ENCODE measurements at regions of chr9 and their contacts with region 1.

Region 1: GRCh38 chr9:77163884-77164283 is 13.4 kb upstream of the VPS13A start:
- DNase-seq: no peak
- ATAC-seq: no peak
- H3K4me3 ChIP-seq: no peak overlapping the region
- H3K27ac ChIP-seq: no peak overlapping the region
- H3K4me1 ChIP-seq: no peaks in the 10 kb centered on the region
- H3K27me3 ChIP-seq: no peaks in the 10 kb centered on the region
- CTCF ChIP-seq: no peak
- POLR2A ChIP-seq: no peak
- RAD21 ChIP-seq: no peak

Region 2: GRCh38 chr9:75615284-75615683 is 1548.6 kb before region 1 on chr9:
- CTCF ChIA-PET with region 1: no interaction called
- POLR2A ChIA-PET with region 1: no interaction called
- RAD21 ChIA-PET with region 1: no interaction called
- intact Hi-C with region 1: no loop called
- DNase-seq: no peak
- ATAC-seq: no peak
- H3K4me3 ChIP-seq: no peak overlapping the region
- H3K27ac ChIP-seq: no peak overlapping the region
- H3K4me1 ChIP-seq: peaks cover 4 to 5% of the 10 kb centered on the region in 2 experiments; a peak in 1 of 4 replicates
- H3K27me3 ChIP-seq: peaks cover 15% of the 10 kb centered on the region
- CTCF ChIP-seq: no peak
- POLR2A ChIP-seq: no peak
- RAD21 ChIP-seq: no peak

Region 3: GRCh38 chr9:76943054-76943453 is 220.8 kb before region 1 on chr9:
- CTCF ChIA-PET with region 1: no interaction called
- POLR2A ChIA-PET with region 1: no interaction called
- RAD21 ChIA-PET with region 1: no interaction called
- intact Hi-C with region 1: no loop called
- DNase-seq: no peak
- ATAC-seq: no peak
- H3K4me3 ChIP-seq: no peak overlapping the region
- H3K27ac ChIP-seq: no peak overlapping the region
- H3K4me1 ChIP-seq: peaks cover 3 to 11% of the 10 kb centered on the region in 2 experiments; a peak in 3 of 4 replicates
- H3K27me3 ChIP-seq: no peaks in the 10 kb centered on the region
- CTCF ChIP-seq: no peak
- POLR2A ChIP-seq: no peak
- RAD21 ChIP-seq: no peak

Region 4: DNA sequence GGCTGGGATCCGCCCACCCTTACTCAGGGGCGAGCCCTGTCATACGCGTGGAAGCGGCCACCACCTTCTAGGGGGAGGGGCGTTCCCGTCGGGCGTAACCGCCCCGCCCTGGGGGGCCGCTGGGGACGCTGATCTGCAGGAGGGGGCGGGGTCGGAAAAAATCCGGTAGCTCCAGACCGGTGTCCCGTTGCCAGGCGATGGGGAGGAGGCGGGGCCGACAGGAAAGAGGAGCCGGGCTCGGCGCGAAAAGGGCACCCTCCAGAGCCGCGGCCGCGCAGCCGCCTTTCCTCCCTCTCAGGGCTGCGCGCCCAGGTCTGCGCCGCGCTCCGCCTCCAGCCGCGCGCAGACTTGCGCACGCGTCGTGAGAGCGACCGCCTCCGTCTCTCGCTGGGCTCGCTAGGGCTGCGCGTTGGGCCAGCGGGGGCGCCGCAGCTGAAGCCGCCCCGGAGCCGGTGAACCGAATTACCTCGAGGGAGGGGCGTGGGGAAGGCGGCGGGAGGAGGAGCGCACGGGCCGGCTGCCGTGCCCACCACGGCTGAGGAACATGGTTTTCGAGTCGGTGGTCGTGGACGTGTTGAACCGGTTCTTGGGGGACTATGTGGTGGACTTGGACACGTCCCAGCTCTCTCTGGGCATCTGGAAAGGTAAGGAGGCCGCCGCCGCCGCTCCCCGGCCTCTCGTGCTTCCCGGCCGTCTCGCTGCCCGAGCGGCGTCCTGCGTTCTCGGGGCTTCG is 13.4 kb after region 1 on chr9 and contains the start of gene VPS13A:
- CTCF ChIA-PET with region 1: interaction called, 24 read pairs
- POLR2A ChIA-PET with region 1: no interaction called
- RAD21 ChIA-PET with region 1: interaction called in 1 of 2 experiments, 3 read pairs
- intact Hi-C with region 1: no loop called
- DNase-seq: peak; percentile 88
- ATAC-seq: peak; percentile 93
- H3K4me3 ChIP-seq: peak within 1 kb of the TSS; percentile 68 to 70
- H3K27ac ChIP-seq: peak within 1 kb of the TSS; percentile 83
- H3K4me1 ChIP-seq: peaks cover 4 to 14% of the 10 kb centered on the region in 2 experiments; a peak in 2 of 4 replicates
- H3K27me3 ChIP-seq: no peaks in the 10 kb centered on the region
- CTCF ChIP-seq: peak in 2 of 3 experiments; percentile 3 to 17; a peak in 3 of 6 replicates
- POLR2A ChIP-seq: peak; percentile 71
- RAD21 ChIP-seq: no peak
- total RNA-seq, gene VPS13A: 52.8 TPM

Region 5: DNA sequence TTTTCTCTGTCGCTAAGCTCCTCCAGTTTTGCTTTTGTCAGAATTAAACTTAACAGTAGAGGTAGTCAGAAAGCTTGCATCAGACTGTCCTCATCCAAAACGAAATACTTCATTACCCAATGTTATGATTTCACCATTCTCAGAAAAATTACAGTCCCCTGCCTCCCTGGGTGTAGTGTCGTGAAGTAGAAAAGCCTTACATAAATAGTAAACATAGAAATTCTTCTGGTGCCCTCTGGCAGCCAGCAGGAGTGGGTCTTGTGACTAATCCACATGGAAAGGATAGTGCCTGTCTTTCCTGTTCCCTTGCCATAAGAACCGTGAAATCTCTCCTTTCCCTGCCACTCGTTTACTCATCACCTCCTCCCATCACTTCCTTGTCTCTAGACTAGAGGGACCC is 253.7 kb after region 1 on chr9:
- CTCF ChIA-PET with region 1: no interaction called
- POLR2A ChIA-PET with region 1: no interaction called
- RAD21 ChIA-PET with region 1: no interaction called
- intact Hi-C with region 1: no loop called
- DNase-seq: no peak
- ATAC-seq: no peak
- H3K4me3 ChIP-seq: no peak overlapping the region
- H3K27ac ChIP-seq: no peak overlapping the region
- H3K4me1 ChIP-seq: no peaks in the 10 kb centered on the region
- H3K27me3 ChIP-seq: no peaks in the 10 kb centered on the region
- CTCF ChIP-seq: no peak
- POLR2A ChIP-seq: no peak
- RAD21 ChIP-seq: no peak

Region 6: GRCh38 chr9:77488439-77489126 is 324.7 kb after region 1 on chr9:
- CTCF ChIA-PET with region 1: no interaction called
- POLR2A ChIA-PET with region 1: no interaction called
- RAD21 ChIA-PET with region 1: no interaction called
- intact Hi-C with region 1: loop called (anchors 2 kb)
- DNase-seq: peak; percentile 7
- ATAC-seq: peak; percentile 77
- H3K4me3 ChIP-seq: no peak overlapping the region
- H3K27ac ChIP-seq: no peak overlapping the region
- H3K4me1 ChIP-seq: no peaks in the 10 kb centered on the region
- H3K27me3 ChIP-seq: no peaks in the 10 kb centered on the region
- CTCF ChIP-seq: peak; percentile 51 to 64 (median 56); a peak in 5 of 6 replicates
- POLR2A ChIP-seq: no peak
- RAD21 ChIP-seq: peak; percentile 70

Region 7: GRCh38 chr9:77751341-77752091 is 587.6 kb after region 1 on chr9:
- CTCF ChIA-PET with region 1: interaction called, 5 read pairs
- POLR2A ChIA-PET with region 1: no interaction called
- RAD21 ChIA-PET with region 1: no interaction called
- intact Hi-C with region 1: loop called (anchors 5 kb)
- DNase-seq: peak; percentile 12
- ATAC-seq: peak; percentile 72
- H3K4me3 ChIP-seq: no peak overlapping the region
- H3K27ac ChIP-seq: no peak overlapping the region
- H3K4me1 ChIP-seq: no peaks in the 10 kb centered on the region
- H3K27me3 ChIP-seq: no peaks in the 10 kb centered on the region
- CTCF ChIP-seq: peak; percentile 39 to 62 (median 46); a peak in 4 of 6 replicates
- POLR2A ChIP-seq: no peak
- RAD21 ChIP-seq: peak; percentile 66

Measured in HCT116 (cell line).